Spleen (tissue), 13 donors: ENCODE measurements at regions of chr6 and their contacts with region 1.

Region 1: DNA sequence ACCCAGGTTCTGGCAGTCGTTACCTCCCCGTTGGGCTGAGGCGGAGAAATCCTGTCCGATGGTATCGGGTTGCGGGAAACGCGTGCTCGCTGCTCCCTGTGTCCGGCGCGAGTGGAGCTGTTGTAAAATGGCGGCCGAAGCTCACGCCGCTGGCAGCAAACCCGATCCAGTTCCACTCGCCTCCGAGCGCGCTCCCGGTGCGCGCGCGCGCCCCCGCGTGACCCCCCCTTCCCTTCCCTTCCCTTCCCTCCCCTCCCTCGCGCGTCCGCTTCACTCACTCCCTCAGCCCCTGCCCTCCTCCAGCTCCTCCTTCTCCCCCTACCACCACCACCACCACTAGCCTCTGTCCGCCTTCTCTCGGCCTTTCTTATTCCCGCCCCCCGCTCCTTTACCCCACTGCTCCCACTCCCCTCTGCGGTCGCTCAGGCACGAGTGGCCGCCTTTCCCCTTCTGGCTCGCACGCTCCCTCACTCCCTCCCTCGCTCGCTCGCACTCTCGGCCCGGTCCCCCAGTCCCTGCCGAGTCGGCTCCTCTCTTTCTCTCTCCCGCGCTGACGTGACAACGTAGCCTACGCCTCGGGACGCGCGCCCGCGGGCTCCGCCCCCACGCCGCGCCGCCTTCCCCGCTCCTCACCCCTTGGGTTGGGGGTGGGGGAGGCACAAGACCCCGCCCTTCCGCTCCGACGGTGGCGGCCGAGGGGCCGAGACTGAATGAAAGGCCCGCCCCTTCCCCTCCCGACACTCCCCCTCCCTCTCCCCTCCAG is at the start of gene SYNCRIP:
- DNase-seq: peak; percentile 100
- H3K4me3 ChIP-seq: peak within 1 kb of the TSS; percentile 92 to 99 (median 98)
- H3K27ac ChIP-seq: peak within 1 kb of the TSS; percentile 97 to 99 (median 98)
- H3K4me1 ChIP-seq: peaks cover 32 to 54% (median 48%) of the 10 kb centered on the region in 6 donors
- H3K27me3 ChIP-seq: no peaks in the 10 kb centered on the region
- CTCF ChIP-seq: peak in 3 of 11 experiments; percentile 3 to 26 (median 8)
- POLR2A ChIP-seq: peak in 2 of 3 donors; percentile 81 to 92
- total RNA-seq, gene SYNCRIP: 60.0 to 92.1 (median 75.7) TPM

Region 2: GRCh38 chr6:85314586-85314985 is 328.4 kb before region 1 on chr6:
- intact Hi-C with region 1: no loop called
- DNase-seq: no peak
- H3K4me3 ChIP-seq: no peak overlapping the region
- H3K27ac ChIP-seq: no peak overlapping the region
- H3K4me1 ChIP-seq: no peaks in the 10 kb centered on the region
- H3K27me3 ChIP-seq: no peaks in the 10 kb centered on the region
- CTCF ChIP-seq: no peak
- POLR2A ChIP-seq: no peak

Region 3: GRCh38 chr6:85394853-85395538 is 248.0 kb before region 1 on chr6:
- intact Hi-C with region 1: no loop called
- DNase-seq: no peak
- H3K4me3 ChIP-seq: no peak overlapping the region
- H3K27ac ChIP-seq: no peak overlapping the region
- H3K4me1 ChIP-seq: no peaks in the 10 kb centered on the region
- H3K27me3 ChIP-seq: no peaks in the 10 kb centered on the region
- CTCF ChIP-seq: no peak
- POLR2A ChIP-seq: no peak

Region 4: GRCh38 chr6:85678602-85679444 is 35.9 kb after region 1 on chr6:
- intact Hi-C with region 1: loop called (anchors 2 kb)
- DNase-seq: peak; percentile 99
- H3K4me3 ChIP-seq: peak overlapping the region; percentile 61 to 87 (median 80)
- H3K27ac ChIP-seq: peak overlapping the region; percentile 66 to 97 (median 95)
- H3K4me1 ChIP-seq: peaks cover 24 to 60% (median 46%) of the 10 kb centered on the region in 6 donors
- H3K27me3 ChIP-seq: no peaks in the 10 kb centered on the region
- CTCF ChIP-seq: peak in 2 of 11 experiments; percentile 0 to 45
- POLR2A ChIP-seq: peak; percentile 96 to 99 (median 98)